ENCODE measurements at regions of chr5 and their contacts with region 1.

Region 1: GRCh38 chr5:100903039-100903887 is at the start of gene ST8SIA4:
- DNase-seq: peak; percentile 92
- H3K4me3 Mint-ChIP-seq: peak within 1 kb of the TSS; percentile 97
- H3K27ac Mint-ChIP-seq: peak within 1 kb of the TSS; percentile 97
- H3K4me1 Mint-ChIP-seq: peaks cover 41% of the 10 kb centered on the region
- H3K27me3 Mint-ChIP-seq: no peaks in the 10 kb centered on the region
- total RNA-seq, gene ST8SIA4: 79.1 and 82.3 TPM in 2 replicates

Region 2: DNA sequence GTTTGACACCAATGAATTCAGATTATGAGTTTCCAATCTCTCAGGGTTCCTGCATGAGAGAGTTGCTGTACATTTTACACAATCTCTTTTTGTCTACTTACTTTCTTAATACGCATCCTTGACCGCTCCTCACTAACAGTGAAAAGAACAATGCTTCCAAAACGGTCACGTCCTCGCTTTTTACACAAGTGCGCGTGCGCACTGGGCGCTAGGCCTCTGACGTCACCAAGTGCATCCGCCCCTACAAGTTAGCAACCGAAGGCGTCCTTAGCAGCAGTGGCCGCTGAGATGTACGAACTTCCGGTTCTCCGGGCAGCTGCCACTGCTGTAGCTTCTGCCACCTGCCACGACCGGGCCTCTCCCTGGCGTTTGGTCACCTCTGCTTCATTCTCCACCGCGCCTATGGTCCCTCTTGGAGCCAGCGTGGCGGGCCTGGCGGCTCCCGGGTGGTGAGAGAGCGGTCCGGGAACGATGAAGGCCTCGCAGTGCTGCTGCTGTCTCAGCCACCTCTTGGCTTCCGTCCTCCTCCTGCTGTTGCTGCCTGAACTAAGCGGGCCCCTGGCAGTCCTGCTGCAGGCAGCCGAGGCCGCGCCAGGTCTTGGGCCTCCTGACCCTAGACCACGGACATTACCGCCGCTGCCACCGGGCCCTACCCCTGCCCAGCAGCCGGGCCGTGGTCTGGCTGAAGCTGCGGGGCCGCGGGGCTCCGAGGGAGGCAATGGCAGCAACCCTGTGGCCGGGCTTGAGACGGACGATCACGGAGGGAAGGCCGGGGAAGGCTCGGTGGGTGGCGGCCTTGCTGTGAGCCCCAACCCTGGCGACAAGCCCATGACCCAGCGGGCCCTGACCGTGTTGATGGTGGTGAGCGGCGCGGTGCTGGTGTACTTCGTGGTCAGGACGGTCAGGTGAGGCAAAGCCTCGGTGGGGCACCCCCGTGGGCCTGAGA is 367.9 kb before region 1 on chr5 and contains the start of gene FAM174A:
- intact Hi-C with region 1: loop called (anchors 2 kb)
- DNase-seq: peak; percentile 93
- H3K4me3 Mint-ChIP-seq: peak within 1 kb of the TSS; percentile 92
- H3K27ac Mint-ChIP-seq: peak within 1 kb of the TSS; percentile 92
- H3K4me1 Mint-ChIP-seq: peaks cover 20% of the 10 kb centered on the region
- H3K27me3 Mint-ChIP-seq: peaks cover 9% of the 10 kb centered on the region
- total RNA-seq, gene FAM174A: 8.9 and 11.5 TPM in 2 replicates

Region 3: DNA sequence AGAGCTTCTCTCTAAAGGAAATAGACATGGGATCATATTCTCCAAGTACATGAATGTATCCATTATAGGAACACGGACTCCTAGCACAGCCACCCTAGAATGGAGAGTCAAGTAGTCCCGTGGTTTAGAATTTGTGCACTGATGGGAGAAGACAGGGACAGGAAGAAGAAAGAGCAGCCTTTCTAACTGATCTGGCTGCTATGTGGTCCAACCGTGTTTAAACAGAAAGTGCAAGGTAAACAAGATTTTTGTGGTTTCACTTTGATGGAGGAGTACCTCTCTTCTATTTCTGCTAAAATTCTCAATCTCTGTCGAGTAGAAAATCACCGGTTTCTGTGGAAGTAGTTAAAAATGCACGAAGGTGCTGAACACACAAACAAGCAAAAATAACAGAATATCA is 171.5 kb before region 1 on chr5:
- intact Hi-C with region 1: loop called (anchors 2 kb)
- DNase-seq: peak; percentile 26
- H3K4me3 Mint-ChIP-seq: peak overlapping the region; percentile 66
- H3K27ac Mint-ChIP-seq: peak overlapping the region; percentile 81
- H3K4me1 Mint-ChIP-seq: peaks cover 20% of the 10 kb centered on the region
- H3K27me3 Mint-ChIP-seq: no peaks in the 10 kb centered on the region

Region 4: DNA sequence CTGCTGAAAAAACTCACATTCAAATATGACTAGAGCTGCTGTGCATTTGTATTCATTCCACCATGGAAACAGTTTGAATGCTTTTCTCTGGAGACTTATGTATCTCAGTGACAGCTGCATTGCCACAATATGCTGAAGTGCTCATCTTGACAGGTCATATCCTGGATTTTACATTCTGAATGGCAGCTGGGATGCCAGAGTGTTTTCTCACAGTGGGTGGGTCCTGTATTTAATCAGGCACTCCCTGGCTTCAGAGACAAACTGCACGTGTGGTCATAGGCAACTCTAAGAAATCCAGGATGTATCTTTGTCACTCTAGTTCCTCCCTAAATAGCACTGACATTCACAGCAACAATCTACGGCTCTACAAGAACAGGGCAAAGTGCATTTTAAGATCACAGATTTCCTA is 75.8 kb before region 1 on chr5:
- intact Hi-C with region 1: loop called (anchors 1 kb)
- DNase-seq: no peak
- H3K4me3 Mint-ChIP-seq: no peak overlapping the region
- H3K27ac Mint-ChIP-seq: peak overlapping the region; percentile 79
- H3K4me1 Mint-ChIP-seq: peaks cover 40% of the 10 kb centered on the region
- H3K27me3 Mint-ChIP-seq: no peaks in the 10 kb centered on the region

Region 5: DNA sequence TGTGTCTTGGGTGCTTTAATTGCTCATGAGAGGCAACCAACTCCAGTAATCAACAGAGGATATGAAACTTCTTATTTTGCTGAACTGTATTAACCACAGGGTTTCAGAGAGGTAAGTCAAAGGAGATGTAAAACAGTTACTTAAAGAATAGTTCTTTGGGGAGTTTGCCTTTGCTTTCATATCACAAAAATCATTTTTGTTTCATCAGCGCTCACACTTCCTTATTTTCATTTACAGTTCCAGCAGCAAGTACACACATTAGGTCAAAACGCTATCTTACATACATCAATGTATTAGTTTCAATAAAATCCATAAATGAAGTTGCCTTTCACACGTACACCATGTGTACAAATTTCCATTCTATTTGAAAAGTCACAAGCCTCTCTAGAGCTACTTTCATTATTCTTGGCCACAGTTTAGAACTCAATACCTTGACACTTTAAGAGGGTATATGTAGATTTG is 50.2 kb before region 1 on chr5:
- intact Hi-C with region 1: loop called (anchors 1 kb)
- DNase-seq: no peak
- H3K4me3 Mint-ChIP-seq: peak overlapping the region; percentile 72
- H3K27ac Mint-ChIP-seq: peak overlapping the region; percentile 97
- H3K4me1 Mint-ChIP-seq: peaks cover 42% of the 10 kb centered on the region
- H3K27me3 Mint-ChIP-seq: no peaks in the 10 kb centered on the region

Region 6: DNA sequence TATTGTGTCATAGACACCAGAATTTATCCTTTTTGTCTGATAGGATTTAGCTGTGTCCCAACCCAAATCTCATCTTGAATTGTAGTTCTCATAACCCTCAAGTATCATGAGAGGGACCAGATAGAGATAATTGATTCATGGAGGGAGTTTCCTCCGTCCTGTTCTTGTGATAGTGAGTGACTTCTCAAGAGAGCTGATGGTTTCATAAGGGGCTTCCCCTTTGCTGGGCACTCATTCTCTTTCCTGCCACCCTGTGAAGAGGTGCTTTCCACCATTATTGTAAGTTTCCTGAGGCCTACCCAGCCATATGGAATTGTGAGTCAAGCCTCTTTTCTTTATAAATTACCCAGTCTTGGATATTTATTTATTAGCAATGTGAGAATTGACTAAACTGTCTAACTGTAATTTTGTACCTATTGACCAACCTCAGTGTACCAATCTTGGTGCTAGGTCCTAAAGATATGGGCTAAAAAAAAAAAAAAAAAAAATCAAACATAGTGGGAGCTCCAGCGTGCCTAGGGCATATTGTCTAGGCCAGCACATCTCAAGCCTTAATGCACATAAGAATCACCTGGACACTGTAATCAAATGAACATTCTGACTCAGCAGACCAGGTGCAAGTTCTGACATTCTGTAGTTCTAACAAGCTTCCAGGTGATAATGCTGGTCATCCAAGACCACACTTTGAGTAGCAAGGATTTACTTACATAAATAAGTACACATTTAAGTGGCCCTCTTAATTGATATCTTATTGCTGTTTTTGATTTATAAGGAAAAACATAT is 30.7 kb before region 1 on chr5:
- intact Hi-C with region 1: loop called (anchors 1 kb)
- DNase-seq: no peak
- H3K4me3 Mint-ChIP-seq: no peak overlapping the region
- H3K27ac Mint-ChIP-seq: peak overlapping the region; percentile 61
- H3K4me1 Mint-ChIP-seq: peaks cover 63% of the 10 kb centered on the region
- H3K27me3 Mint-ChIP-seq: no peaks in the 10 kb centered on the region

Region 7: GRCh38 chr5:100913298-100913697 is 10.0 kb after region 1 on chr5:
- intact Hi-C with region 1: loop called (anchors 1 kb)
- DNase-seq: no peak
- H3K4me3 Mint-ChIP-seq: no peak overlapping the region
- H3K27ac Mint-ChIP-seq: peak overlapping the region; percentile 3
- H3K4me1 Mint-ChIP-seq: peaks cover 29% of the 10 kb centered on the region
- H3K27me3 Mint-ChIP-seq: no peaks in the 10 kb centered on the region

Region 8: GRCh38 chr5:101102506-101102905 is 199.2 kb after region 1 on chr5:
- intact Hi-C with region 1: no loop called
- DNase-seq: no peak
- H3K4me3 Mint-ChIP-seq: no peak overlapping the region
- H3K27ac Mint-ChIP-seq: no peak overlapping the region
- H3K4me1 Mint-ChIP-seq: no peaks in the 10 kb centered on the region
- H3K27me3 Mint-ChIP-seq: peaks cover 2% of the 10 kb centered on the region